Activated CD4-positive, alpha-beta T cell treated with anti-CD3 and anti-CD28 coated beads for 36 hours (primary cell): ENCODE measurements at regions of chr6 and their contacts with region 1.

Region 1: DNA sequence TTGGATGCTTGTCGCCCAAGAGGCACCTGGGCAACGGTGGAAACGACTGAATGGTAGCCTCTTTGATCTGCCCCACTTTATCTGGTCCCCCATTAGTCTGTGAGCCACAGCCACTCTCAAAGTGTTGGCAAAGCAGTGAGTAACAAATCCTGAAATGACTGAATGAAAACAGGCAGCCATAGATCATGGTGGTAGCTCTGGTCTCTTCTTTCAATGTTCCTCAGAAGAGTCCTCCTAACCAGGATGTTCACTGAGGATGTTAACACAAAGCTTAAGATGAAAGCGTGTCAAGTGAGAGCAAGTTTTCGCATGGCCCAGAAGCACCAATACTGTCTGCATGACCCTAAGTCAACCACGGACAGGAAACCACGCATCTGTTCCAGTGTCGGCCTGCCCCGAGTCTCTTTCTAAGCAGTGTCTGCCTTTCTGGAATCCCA is 107.3 kb downstream of the IRF4 start:
- DNase-seq: peak; percentile 81
- ATAC-seq: peak; percentile 64
- H3K4me3 Mint-ChIP-seq: peak overlapping the region; percentile 63
- H3K27ac Mint-ChIP-seq: peak overlapping the region; percentile 93
- H3K4me1 Mint-ChIP-seq: peaks cover 87% of the 10 kb centered on the region
- H3K27me3 Mint-ChIP-seq: no peaks in the 10 kb centered on the region

Region 2: GRCh38 chr6:399785-400534 is 98.9 kb before region 1 on chr6:
- CTCF ChIA-PET with region 1: interaction called, 6 read pairs
- POLR2A ChIA-PET with region 1: interaction called, 32 read pairs
- intact Hi-C with region 1: loop called (anchors 1 to 2 kb)
- DNase-seq: peak; percentile 78
- ATAC-seq: peak; percentile 28
- H3K4me3 Mint-ChIP-seq: peak overlapping the region; percentile 68
- H3K27ac Mint-ChIP-seq: peak overlapping the region; percentile 88
- H3K4me1 Mint-ChIP-seq: peaks cover 91% of the 10 kb centered on the region
- H3K27me3 Mint-ChIP-seq: no peaks in the 10 kb centered on the region

Region 3: DNA sequence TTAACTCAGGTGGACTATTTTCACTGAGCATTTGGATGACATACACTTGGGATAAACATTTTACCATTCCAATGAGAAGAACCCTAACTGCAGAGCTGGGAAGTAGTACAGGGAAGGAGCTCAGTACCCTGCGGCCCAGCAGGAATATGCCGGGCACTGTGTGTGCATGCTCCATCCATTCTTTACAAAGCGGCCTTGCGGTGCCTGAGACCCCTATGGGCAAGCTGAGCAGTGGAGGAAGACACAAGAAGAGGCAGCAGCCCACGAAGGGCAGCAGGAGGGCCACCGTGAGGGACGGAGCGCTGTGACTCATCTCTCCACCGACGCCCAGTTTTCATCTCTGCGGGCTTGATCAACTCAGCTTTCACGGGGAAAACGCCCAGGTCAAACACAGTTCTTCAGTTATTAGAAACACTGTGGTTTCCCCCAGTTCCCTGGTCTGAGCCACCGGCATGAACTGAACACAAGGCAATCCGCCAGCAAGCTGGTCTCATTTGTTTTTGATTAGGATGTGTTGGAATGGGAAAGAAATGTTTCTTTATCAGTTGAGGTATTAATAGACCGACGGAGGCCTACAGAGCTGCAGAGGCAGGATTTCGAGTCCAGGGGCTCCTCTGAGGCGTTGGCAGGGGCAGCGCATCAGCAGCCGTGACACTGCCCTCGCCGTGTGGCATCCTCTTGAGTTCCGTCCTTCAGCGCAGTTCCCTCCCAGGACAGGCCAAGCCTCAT is 62.3 kb before region 1 on chr6:
- CTCF ChIA-PET with region 1: interaction called, 4 read pairs
- POLR2A ChIA-PET with region 1: interaction called, 9 read pairs
- intact Hi-C with region 1: loop called in 1 of 2 experiments (anchors 2 kb)
- DNase-seq: no peak
- ATAC-seq: no peak
- H3K4me3 Mint-ChIP-seq: no peak overlapping the region
- H3K27ac Mint-ChIP-seq: no peak overlapping the region
- H3K4me1 Mint-ChIP-seq: peaks cover 43% of the 10 kb centered on the region
- H3K27me3 Mint-ChIP-seq: no peaks in the 10 kb centered on the region

Region 4: DNA sequence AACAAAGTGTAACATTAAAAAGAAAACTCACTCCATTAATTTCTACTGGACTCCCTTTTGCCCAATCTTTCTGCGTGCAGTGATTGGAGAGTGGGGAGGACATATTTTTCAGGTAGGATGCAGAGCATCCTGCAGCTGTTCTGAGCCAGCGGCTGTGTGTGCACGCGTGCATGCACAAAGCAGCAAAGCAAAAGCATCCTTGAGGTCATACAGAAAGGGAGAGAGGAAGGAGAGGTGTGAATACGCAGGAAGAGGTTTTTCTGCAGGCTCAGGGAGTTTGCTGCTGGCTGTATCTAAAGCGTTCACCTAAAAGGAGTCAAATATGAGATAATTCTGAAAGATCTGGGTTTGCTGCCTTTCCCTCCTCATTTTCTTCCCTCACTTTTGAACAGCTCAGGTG is 49.7 kb after region 1 on chr6:
- CTCF ChIA-PET with region 1: interaction called, 8 read pairs
- POLR2A ChIA-PET with region 1: interaction called, 8 read pairs
- intact Hi-C with region 1: loop called in 1 of 2 experiments (anchors 2 kb)
- DNase-seq: peak; percentile 75
- ATAC-seq: peak; percentile 90
- H3K4me3 Mint-ChIP-seq: peak overlapping the region; percentile 57
- H3K27ac Mint-ChIP-seq: peak overlapping the region; percentile 92
- H3K4me1 Mint-ChIP-seq: peaks cover 70% of the 10 kb centered on the region
- H3K27me3 Mint-ChIP-seq: no peaks in the 10 kb centered on the region

Region 5: DNA sequence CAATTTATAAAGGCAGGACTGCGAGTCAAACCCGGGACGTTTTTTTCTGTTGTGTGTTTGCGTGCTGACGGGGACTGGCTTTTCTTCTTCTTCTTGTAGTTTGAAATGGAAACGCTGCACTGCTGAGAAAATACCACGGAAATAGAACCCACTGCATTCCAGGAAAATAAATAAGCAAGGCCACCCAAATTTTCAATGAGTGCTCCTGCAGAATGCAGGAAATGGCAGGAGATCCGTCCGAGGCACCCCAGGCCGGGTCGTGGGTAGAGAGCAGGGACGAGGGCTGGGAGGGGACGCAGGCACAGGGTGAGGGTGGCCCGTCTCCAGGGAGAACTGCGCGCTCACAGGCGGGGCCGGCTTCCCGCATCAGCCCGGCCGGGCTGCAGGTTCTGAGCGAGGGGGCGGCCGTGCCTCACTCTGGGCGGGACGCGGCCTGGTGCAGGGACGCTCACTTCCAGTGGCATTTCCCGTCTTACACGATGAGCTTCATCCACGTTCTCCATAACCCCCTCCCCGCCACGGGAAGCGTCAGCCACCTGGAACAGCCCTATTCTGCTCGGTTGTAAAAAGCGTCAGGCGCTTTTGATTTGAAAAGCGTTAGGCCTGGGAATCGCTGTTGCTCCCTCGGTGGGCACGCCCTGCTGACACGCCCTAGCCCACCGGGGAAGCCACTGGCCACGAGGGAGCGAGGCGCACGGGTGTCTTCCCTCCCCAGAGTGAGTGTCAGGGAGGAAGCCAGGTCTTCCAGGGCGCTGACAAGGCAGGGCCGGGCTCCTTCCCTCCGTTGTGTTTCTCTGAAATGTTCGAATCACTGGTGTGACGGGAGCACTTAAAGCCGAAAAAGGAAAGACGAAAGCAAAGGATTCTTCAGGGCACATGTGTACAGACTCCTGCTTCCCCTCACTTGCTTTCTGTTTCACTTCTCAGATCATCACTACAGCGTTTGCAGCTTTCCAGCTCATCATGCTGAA is 212.1 kb after region 1 on chr6:
- CTCF ChIA-PET with region 1: no interaction called
- POLR2A ChIA-PET with region 1: no interaction called
- intact Hi-C with region 1: loop called in 1 of 2 experiments (anchors 10 kb)
- DNase-seq: peak; percentile 59
- ATAC-seq: peak; percentile 92
- H3K4me3 Mint-ChIP-seq: peak overlapping the region; percentile 80
- H3K27ac Mint-ChIP-seq: peak overlapping the region; percentile 97
- H3K4me1 Mint-ChIP-seq: peaks cover 22% of the 10 kb centered on the region
- H3K27me3 Mint-ChIP-seq: peaks cover 6% of the 10 kb centered on the region